B cell (primary cell): ENCODE measurements at regions of chr17 and their contacts with region 1.

Region 1: DNA sequence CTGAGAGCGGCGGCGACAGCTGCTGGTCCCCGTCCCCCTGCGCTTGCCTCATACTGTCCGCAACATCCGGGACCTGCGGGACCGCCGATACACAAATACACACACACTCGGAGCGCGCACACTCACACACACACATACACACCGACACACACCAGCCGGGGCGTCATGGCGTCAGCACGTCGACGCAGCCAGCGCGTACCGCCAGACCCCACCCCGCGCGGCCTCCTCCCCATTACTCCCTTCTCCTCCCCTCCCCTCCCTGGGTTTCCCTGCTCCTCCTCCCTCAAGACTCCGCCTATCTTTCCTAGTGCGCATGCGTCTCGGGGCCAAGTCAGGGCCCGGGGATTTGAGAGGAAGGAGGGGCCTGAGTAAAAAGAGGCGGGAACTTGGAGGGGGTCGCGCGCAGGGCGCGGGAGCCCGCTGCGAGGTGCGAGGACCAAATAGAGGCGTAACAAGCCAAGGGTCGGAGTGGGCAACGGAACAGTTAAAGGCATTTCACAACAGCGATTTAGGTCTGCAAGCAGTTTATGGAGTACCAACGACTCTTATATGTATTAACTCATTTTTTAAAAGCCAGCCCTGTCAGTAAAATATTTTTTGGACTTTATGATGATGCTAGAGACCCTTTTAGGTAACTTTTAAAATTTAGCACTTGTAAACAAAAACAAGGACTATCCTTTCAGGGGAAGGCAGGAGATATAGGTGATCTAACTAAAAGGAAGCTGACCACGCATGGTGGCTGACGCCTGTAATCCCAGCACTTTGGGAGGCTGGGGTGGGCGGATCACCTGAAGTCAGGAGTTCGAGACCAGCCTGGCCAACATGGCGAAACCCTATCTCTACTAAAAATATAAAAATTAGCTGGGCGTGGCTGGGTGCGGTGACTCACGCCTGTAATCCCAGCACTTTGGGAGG is at the start of gene SPOP:
- DNase-seq: peak; percentile 99
- ATAC-seq: peak; percentile 91
- H3K4me3 ChIP-seq: peak within 1 kb of the TSS; percentile 73 to 97 (median 87)
- H3K4me3 Mint-ChIP-seq: peak within 1 kb of the TSS; percentile 94
- H3K27ac ChIP-seq: peak within 1 kb of the TSS; percentile 98 to 99
- H3K27ac Mint-ChIP-seq: peak within 1 kb of the TSS; percentile 99
- H3K4me1 ChIP-seq: peaks cover 31 to 33% of the 10 kb centered on the region in 2 donors
- H3K4me1 Mint-ChIP-seq: peaks cover 43% of the 10 kb centered on the region
- H3K27me3 ChIP-seq: no peaks in the 10 kb centered on the region
- H3K27me3 Mint-ChIP-seq: no peaks in the 10 kb centered on the region
- CTCF ChIP-seq: no peak
- total RNA-seq, gene SPOP: 72.1 and 79.2 TPM in 2 replicates

Region 2: GRCh38 chr17:49191917-49192741 is 486.1 kb before region 1 on chr17:
- CTCF ChIA-PET with region 1: no interaction called
- POLR2A ChIA-PET with region 1: no interaction called
- intact Hi-C with region 1: loop called (anchors 10 kb)
- DNase-seq: peak; percentile 93
- ATAC-seq: peak; percentile 42
- H3K4me3 ChIP-seq: peak overlapping the region; percentile 76 to 95 (median 88)
- H3K4me3 Mint-ChIP-seq: peak overlapping the region; percentile 93
- H3K27ac ChIP-seq: peak overlapping the region; percentile 92 to 95
- H3K27ac Mint-ChIP-seq: peak overlapping the region; percentile 97
- H3K4me1 ChIP-seq: peaks cover 11 to 23% of the 10 kb centered on the region in 2 donors
- H3K4me1 Mint-ChIP-seq: peaks cover 32% of the 10 kb centered on the region
- H3K27me3 ChIP-seq: no peaks in the 10 kb centered on the region
- H3K27me3 Mint-ChIP-seq: no peaks in the 10 kb centered on the region
- CTCF ChIP-seq: peak; percentile 66

Region 3: DNA sequence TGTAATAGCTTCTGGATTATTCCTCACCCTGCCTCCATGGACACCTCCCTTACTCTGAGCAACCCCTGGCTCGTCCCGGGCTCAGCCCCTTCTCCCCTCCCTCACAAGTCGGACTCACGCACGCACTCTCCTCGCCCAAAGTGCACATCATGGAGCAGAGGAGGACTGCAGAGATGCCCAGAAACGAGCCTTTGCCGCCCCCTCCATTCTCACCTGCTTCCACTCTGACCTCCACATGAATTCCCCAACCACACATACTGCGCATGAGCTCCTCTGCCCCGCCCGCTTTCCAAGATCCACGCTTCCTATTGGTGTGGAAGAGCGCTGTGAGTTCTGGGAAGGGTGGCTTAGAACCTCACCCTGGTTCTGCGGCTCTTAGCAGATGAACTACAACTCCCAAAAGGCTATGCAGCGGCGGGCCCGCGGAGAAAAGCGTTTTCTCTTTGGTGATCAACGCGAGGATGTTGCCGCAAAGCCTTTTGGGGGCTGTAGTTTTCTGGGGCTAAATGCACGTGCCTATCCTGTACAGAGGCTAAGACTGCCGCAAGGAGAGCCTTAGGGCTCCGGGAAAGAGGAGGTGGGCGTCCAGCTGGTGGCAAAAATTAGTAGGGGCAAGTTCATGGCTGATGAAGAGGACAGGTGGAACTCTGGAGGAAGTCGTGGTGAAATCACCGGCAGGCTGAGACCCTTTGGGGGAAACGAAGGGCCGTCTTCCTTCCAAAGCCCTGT is 263.4 kb before region 1 on chr17 and contains the start of gene PHB1:
- CTCF ChIA-PET with region 1: no interaction called
- POLR2A ChIA-PET with region 1: no interaction called
- intact Hi-C with region 1: loop called (anchors 10 kb)
- DNase-seq: peak; percentile 96
- ATAC-seq: peak; percentile 98
- H3K4me3 ChIP-seq: peak within 1 kb of the TSS; percentile 51 to 93 (median 75)
- H3K4me3 Mint-ChIP-seq: peak within 1 kb of the TSS; percentile 94
- H3K27ac ChIP-seq: peak within 1 kb of the TSS in 1 of 2 donors; percentile 72
- H3K27ac Mint-ChIP-seq: peak within 1 kb of the TSS; percentile 84
- H3K4me1 ChIP-seq: peaks cover 7 to 17% of the 10 kb centered on the region in 2 donors
- H3K4me1 Mint-ChIP-seq: peaks cover 22% of the 10 kb centered on the region
- H3K27me3 ChIP-seq: no peaks in the 10 kb centered on the region
- H3K27me3 Mint-ChIP-seq: no peaks in the 10 kb centered on the region
- CTCF ChIP-seq: no peak
- total RNA-seq, gene PHB1: 72.3 and 73.6 TPM in 2 replicates

Region 4: DNA sequence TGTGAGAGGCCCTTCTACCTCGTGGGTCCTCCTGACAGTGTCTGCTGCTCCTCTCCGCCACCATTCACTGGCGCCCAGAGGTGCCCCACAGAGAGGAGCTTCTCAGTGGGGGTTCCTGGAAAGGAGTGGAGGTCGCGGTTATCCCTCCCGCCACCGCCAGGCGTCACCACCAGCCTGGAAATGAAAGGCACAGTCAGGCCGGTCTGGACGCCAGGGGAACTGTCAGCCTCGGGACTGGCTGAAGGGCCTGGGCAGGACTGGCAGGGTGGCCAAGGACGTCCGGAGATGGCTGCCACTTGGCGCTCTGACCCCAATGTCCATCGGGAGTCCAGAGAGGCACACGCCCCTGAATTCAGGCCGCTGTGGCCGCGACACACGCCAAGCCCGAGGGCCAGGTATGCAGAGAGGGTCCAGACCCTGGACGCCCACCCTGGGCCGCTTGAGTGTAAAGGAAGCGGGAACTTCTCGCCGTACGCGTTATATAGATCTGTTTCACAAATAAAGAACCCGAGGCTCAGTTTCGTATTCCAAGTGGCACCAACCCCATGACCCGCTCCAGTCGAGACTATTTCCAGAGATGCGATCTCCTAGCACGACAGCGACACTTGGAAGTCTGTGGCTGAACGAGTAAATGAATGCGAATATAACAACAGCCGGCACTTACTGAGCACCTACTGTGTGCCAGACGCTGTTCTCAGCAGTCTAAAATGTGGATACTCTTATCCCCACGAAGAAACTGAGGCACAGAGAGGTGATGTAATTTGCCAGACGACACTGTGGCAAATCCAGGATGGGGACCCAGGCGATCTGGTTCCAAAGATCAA is 110.1 kb before region 1 on chr17:
- CTCF ChIA-PET with region 1: interaction called, 13 read pairs
- POLR2A ChIA-PET with region 1: interaction called, 9 read pairs
- intact Hi-C with region 1: loop called (anchors 1 kb)
- DNase-seq: peak; percentile 88
- ATAC-seq: peak; percentile 66
- H3K4me3 ChIP-seq: peak overlapping the region in 3 of 5 experiments; percentile 20 to 39 (median 23)
- H3K4me3 Mint-ChIP-seq: peak overlapping the region; percentile 79
- H3K27ac ChIP-seq: no peak overlapping the region
- H3K27ac Mint-ChIP-seq: peak overlapping the region; percentile 32
- H3K4me1 ChIP-seq: peaks cover 6 to 17% of the 10 kb centered on the region in 2 donors
- H3K4me1 Mint-ChIP-seq: peaks cover 19% of the 10 kb centered on the region
- H3K27me3 ChIP-seq: peaks cover 0 to 42% (median 9%) of the 10 kb centered on the region in 4 experiments
- H3K27me3 Mint-ChIP-seq: peaks cover 36% of the 10 kb centered on the region
- CTCF ChIP-seq: peak; percentile 93

Region 5: DNA sequence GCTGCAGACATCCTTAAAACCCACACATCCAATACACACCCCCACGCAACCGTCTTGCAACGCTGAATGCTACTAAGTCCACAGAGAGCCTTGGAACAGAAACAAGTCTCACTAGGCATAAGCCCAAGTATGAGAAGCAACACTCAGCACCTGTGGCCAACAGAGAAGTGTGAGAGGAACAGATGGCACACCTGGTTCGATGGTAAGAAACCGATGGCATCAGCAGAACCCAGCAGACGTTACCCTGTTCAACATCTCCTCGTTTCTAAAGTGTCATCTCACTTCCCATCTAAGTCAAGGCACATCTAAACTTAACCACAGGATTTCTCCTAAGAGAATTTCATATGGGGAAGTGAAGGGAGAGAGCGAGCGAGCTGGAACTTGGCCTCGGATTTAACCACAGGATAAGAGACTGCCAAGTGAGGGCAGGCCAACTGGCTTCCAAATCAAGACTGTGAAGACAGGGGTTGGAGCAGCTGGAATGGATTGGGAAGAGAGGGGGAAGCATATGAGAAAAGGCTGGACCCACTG is 61.5 kb before region 1 on chr17:
- CTCF ChIA-PET with region 1: no interaction called
- POLR2A ChIA-PET with region 1: no interaction called
- intact Hi-C with region 1: no loop called
- DNase-seq: no peak
- ATAC-seq: no peak
- H3K4me3 ChIP-seq: no peak overlapping the region
- H3K4me3 Mint-ChIP-seq: no peak overlapping the region
- H3K27ac ChIP-seq: no peak overlapping the region
- H3K27ac Mint-ChIP-seq: peak overlapping the region; percentile 2
- H3K4me1 ChIP-seq: no peaks in the 10 kb centered on the region
- H3K4me1 Mint-ChIP-seq: no peaks in the 10 kb centered on the region
- H3K27me3 ChIP-seq: no peaks in the 10 kb centered on the region
- H3K27me3 Mint-ChIP-seq: no peaks in the 10 kb centered on the region
- CTCF ChIP-seq: no peak

Region 6: DNA sequence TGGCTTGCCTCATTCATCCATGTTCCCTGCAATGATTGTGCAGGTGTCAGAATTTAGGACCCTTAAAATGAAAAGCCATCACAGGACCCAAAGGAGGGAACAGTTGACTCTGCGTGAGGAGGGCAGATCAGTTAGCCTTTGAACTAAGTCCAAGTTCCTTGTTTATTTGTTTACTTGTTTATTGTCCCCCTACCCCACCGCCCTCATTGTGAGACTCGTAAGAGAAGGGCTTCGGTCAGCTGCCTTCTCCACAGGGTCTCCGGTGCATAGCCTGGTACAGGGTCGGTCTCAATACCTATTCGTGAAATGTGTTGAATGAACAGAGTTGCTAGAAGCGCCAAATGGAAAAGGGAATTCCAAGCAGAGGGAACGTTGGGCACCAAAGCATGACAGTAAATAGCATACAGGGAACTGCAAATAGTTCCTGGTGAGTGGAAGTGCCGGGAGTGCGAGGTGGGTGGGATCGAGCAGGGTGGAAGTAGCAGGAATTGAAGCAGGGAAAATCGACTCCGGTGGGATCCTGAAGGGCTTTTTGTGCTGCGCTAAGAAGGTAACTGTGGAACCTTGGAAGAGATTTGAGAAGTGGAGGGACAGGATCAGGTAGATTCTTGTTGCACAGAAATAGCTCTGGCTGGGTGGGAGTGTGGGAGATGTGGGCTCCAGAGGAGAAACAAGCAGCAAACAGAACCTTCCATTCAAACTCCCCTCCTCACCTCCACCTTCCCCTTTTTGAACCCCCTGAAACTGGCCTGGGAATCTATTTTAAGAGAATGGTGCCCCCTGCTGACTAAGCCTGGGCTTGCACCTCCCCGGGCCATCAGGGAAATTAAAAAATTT is 16.9 kb after region 1 on chr17:
- CTCF ChIA-PET with region 1: interaction called, 9 read pairs
- POLR2A ChIA-PET with region 1: no interaction called
- intact Hi-C with region 1: loop called (anchors 1 kb)
- DNase-seq: peak; percentile 83
- ATAC-seq: peak; percentile 80
- H3K4me3 ChIP-seq: no peak overlapping the region
- H3K4me3 Mint-ChIP-seq: no peak overlapping the region
- H3K27ac ChIP-seq: no peak overlapping the region
- H3K27ac Mint-ChIP-seq: no peak overlapping the region
- H3K4me1 ChIP-seq: peaks cover 16 to 19% of the 10 kb centered on the region in 2 donors
- H3K4me1 Mint-ChIP-seq: peaks cover 17% of the 10 kb centered on the region
- H3K27me3 ChIP-seq: no peaks in the 10 kb centered on the region
- H3K27me3 Mint-ChIP-seq: peaks cover 3% of the 10 kb centered on the region
- CTCF ChIP-seq: peak; percentile 97

Region 7: DNA sequence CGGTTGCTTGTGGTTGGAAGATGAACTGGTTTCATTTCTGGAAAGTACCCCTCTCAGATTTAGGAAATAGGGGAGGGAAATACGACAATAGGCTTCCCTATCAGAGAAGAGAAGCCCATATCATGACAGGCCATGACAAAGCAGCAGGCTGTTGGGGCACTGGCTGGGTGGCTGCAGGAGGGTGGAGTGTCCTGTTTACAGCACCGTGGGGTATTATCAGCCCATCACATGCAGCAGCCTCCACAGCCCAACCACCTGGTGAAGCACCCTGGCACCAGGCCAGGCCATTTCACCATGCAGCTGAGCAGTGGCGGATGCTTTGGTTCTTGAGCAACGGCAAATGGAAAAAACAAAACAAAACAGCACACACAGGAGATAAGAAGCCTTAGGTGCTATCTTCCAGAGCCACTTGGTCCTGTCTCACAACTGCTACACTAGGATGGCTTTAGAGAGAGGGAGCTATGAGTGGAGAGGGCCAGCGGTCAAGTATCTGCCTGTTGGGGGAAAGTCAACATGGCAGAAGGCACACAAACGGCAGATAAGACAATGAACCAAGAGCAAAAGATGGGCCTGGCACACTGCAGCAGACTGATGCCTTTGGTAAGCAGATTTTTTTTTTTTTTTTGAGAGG is 61.6 kb after region 1 on chr17:
- CTCF ChIA-PET with region 1: no interaction called
- POLR2A ChIA-PET with region 1: interaction called, 7 read pairs
- intact Hi-C with region 1: loop called (anchors 1 kb)
- DNase-seq: peak; percentile 97
- ATAC-seq: peak; percentile 96
- H3K4me3 ChIP-seq: peak overlapping the region; percentile 4 to 57 (median 52)
- H3K4me3 Mint-ChIP-seq: peak overlapping the region; percentile 95
- H3K27ac ChIP-seq: peak overlapping the region; percentile 89 to 98
- H3K27ac Mint-ChIP-seq: peak overlapping the region; percentile 100
- H3K4me1 ChIP-seq: peaks cover 76 to 84% of the 10 kb centered on the region in 2 donors
- H3K4me1 Mint-ChIP-seq: peaks cover 85% of the 10 kb centered on the region
- H3K27me3 ChIP-seq: no peaks in the 10 kb centered on the region
- H3K27me3 Mint-ChIP-seq: no peaks in the 10 kb centered on the region
- CTCF ChIP-seq: no peak

Region 8: GRCh38 chr17:49788478-49789242 is 110.5 kb after region 1 on chr17 and contains the start of gene KAT7:
- CTCF ChIA-PET with region 1: no interaction called
- POLR2A ChIA-PET with region 1: interaction called, 3 read pairs
- intact Hi-C with region 1: loop called (anchors 1 kb)
- DNase-seq: peak; percentile 99
- ATAC-seq: peak; percentile 83
- H3K4me3 ChIP-seq: peak within 1 kb of the TSS; percentile 68 to 100 (median 96)
- H3K4me3 Mint-ChIP-seq: peak within 1 kb of the TSS; percentile 98
- H3K27ac ChIP-seq: peak within 1 kb of the TSS; percentile 89 to 98
- H3K27ac Mint-ChIP-seq: peak within 1 kb of the TSS; percentile 99
- H3K4me1 ChIP-seq: peaks cover 18 to 20% of the 10 kb centered on the region in 2 donors
- H3K4me1 Mint-ChIP-seq: peaks cover 50% of the 10 kb centered on the region
- H3K27me3 ChIP-seq: no peaks in the 10 kb centered on the region
- H3K27me3 Mint-ChIP-seq: no peaks in the 10 kb centered on the region
- CTCF ChIP-seq: no peak
- total RNA-seq, gene KAT7: 124 and 127 TPM in 2 replicates